ENCODE measurements at regions of chr7 and their contacts with region 1.

Region 1: GRCh38 chr7:80095545-80095944 is 39.1 kb upstream of the GNAI1 start:
- DNase-seq: peak; percentile 42
- H3K4me3 ChIP-seq: no peak overlapping the region
- H3K27ac ChIP-seq: no peak overlapping the region
- H3K4me1 ChIP-seq: no peaks in the 10 kb centered on the region
- H3K27me3 ChIP-seq: no peaks in the 10 kb centered on the region
- CTCF ChIP-seq: peak; percentile 61

Region 2: DNA sequence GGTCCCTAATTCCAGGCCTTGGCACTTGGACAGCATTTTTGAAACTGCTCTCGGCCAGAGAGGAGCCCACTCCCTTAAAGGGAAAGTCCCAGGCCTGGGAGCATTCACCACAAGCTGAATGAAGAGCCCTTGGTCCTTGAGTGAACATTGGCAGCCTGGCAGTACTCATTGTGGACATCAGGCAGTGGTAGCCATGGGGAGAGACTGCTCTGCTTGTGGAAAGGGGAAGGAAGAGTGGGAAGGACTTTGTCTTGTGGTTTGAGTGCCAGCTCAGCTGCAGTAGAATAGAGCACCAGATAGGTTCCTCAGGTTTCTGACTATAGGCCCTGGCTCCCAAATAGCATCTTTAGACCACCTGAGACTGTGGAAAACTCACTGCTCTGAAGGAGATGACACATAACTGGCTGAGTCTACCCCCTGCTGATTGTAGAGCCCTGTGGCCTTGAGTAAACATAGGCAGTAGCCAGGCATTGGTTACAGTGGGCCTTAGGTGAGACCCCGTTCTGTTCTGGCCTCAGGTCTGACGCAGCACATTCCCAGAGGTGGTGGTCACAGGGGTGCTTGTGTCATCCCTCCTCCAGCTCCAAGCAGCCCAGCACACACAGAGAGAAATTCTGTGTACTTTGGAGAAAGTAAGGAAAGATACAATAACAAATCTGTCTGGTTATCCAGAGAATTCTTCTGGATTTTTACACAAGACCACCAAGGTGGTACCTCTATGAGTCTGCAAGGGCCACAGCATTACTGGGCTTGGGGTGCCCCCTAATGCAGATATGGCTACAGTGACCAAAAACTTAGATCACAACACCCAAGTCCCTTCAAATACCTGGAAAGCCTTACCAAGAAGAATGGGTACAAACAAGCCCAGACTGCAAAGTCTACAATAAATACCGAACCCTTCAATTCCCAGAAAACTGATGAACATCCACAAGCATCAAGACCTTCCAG is 192.9 kb after region 1 on chr7:
- CTCF ChIA-PET with region 1: no interaction called
- POLR2A ChIA-PET with region 1: no interaction called
- intact Hi-C with region 1: loop called (anchors 10 kb)
- DNase-seq: peak; percentile 41
- H3K4me3 ChIP-seq: no peak overlapping the region
- H3K27ac ChIP-seq: no peak overlapping the region
- H3K4me1 ChIP-seq: no peaks in the 10 kb centered on the region
- H3K27me3 ChIP-seq: no peaks in the 10 kb centered on the region
- CTCF ChIP-seq: peak; percentile 52

Region 3: GRCh38 chr7:80392229-80393169 is 297.0 kb after region 1 on chr7:
- CTCF ChIA-PET with region 1: no interaction called
- POLR2A ChIA-PET with region 1: no interaction called
- intact Hi-C with region 1: loop called (anchors 10 kb)
- DNase-seq: peak; percentile 57
- H3K4me3 ChIP-seq: no peak overlapping the region
- H3K27ac ChIP-seq: no peak overlapping the region
- H3K4me1 ChIP-seq: no peaks in the 10 kb centered on the region
- H3K27me3 ChIP-seq: no peaks in the 10 kb centered on the region
- CTCF ChIP-seq: peak; percentile 61; the same call in 1 of the 2 replicates

Region 4: GRCh38 chr7:81430150-81430549 is 1334.6 kb after region 1 on chr7:
- CTCF ChIA-PET with region 1: no interaction called
- POLR2A ChIA-PET with region 1: no interaction called
- intact Hi-C with region 1: no loop called
- DNase-seq: no peak
- H3K4me3 ChIP-seq: no peak overlapping the region
- H3K27ac ChIP-seq: no peak overlapping the region
- H3K4me1 ChIP-seq: peaks cover 8% of the 10 kb centered on the region
- H3K27me3 ChIP-seq: peaks cover 3% of the 10 kb centered on the region
- CTCF ChIP-seq: no peak